AG04449 (cell line): ENCODE measurements at regions of chr11 and their contacts with region 1.

Region 1: DNA sequence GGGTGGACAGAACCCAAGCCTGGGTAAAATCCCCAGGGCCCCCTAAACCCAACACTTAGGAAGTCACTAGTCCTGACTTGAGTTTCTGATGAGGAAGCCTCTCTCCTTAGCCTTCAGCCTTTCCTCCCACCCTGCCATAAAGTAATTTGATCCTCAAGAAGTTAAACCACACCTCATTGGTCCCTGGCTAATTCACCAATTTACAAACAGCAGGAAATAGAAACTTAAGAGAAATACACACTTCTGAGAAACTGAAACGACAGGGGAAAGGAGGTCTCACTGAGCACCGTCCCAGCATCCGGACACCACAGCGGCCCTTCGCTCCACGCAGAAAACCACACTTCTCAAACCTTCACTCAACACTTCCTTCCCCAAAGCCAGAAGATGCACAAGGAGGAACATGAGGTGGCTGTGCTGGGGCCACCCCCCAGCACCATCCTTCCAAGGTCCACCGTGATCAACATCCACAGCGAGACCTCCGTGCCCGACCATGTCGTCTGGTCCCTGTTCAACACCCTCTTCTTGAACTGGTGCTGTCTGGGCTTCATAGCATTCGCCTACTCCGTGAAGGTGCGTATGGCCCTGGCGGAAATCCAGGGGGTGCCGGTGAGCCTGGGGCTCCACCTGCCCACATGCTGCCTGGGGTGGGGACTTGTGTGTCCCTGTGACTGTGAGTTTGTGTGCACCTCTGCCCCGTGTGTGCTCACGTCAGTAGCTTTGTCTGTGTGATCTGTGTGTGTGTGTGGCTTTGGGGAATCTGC is at the start of gene IFITM1:
- DNase-seq: peak; percentile 31
- H3K4me3 ChIP-seq: peak within 1 kb of the TSS; percentile 64
- CTCF ChIP-seq: no peak

Region 2: GRCh38 chr11:340539-341512 is 26.9 kb after region 1 on chr11:
- CTCF ChIA-PET with region 1: interaction called, 12 read pairs
- POLR2A ChIA-PET with region 1: no interaction called
- DNase-seq: no peak
- H3K4me3 ChIP-seq: no peak overlapping the region
- CTCF ChIP-seq: no peak

Region 3: DNA sequence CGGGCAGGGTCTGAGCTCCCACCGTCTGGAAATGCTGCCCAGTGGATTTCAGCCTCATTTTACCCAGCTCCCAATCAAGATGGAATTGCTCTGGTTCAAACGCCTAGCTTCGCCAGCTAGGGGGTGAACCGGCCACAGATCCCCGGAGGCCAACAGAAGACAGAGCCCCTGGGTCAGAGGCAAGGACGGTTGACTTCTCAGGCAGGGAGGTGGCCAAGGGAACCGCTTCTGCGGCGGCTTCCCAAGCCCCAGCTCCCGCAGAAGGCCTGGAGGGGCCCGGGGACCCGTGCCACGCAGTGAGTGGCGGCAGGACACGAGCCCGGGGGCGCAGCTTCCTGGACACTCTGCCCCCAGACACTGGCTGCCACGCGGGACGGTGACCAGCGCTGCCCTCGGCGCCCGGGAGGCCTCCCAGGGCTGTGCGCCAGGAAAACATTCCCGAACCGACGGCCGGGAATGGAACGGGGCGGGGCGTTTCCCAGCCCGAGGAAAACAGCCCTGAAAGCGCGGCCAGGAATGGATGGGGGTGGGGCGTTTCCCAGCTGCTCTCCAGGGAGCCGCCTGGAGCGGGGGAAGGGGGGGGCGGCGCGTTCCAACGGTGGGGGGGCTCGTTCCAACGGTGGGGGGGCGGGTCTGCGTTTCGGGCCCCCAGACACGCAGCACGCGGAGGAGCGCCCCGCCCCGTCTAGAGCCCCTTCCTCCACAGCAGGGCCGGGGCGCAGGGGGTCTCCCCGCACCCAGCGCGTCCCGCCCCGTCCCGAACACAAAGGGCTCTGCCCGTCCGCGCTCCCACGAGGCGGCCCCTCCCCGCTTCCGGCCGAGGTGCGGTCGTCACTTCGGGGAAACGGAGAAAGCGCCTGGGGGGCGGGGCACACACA is 41.9 kb after region 1 on chr11:
- CTCF ChIA-PET with region 1: interaction called, 16 read pairs
- POLR2A ChIA-PET with region 1: interaction called, 7 read pairs
- DNase-seq: peak; percentile 70
- H3K4me3 ChIP-seq: peak overlapping the region; percentile 38
- CTCF ChIP-seq: no peak

Region 4: DNA sequence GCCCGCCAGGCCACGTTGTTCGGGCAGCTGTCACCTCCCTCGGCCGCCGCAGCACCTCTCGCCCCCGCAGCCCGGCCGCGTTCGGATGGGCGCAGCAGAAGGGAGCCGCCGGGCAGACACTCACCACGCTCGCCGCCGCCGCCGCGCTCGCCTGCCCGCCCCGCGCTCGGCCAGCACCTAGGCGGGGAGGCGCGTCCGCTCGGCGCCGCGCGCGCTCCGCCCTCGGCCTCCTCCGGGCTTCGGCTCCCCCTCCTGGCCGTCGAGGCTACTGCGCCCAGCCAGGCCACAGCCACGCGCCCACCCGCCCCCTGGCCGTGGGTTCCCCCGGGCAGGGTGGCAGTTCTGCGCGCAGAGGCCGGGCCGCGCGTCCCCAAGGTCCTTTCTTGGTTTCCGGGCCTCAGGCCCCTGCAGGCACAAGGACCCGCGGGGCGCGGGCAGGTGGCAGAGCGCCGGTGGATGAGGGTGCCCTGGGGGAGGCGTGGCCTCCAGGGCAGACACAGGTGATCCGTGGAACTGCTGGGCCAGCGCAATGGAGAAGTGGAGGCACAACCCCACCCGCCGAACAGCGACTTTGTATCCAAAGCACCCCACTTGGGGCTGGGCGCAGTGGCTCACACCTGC is 484.2 kb after region 1 on chr11 and contains the start of gene SLC25A22:
- CTCF ChIA-PET with region 1: no interaction called
- POLR2A ChIA-PET with region 1: no interaction called
- DNase-seq: no peak
- H3K4me3 ChIP-seq: peak within 1 kb of the TSS; percentile 81
- CTCF ChIP-seq: peak; percentile 81